Activated CD4-positive, alpha-beta T cell treated with anti-CD3 and anti-CD28 coated beads for 36 hours (primary cell): ENCODE measurements at regions of chr4 and their contacts with region 1.

Region 1: GRCh38 chr4:1289207-1290164 is at the start of gene MAEA:
- DNase-seq: peak; percentile 99
- ATAC-seq: peak; percentile 98
- H3K4me3 Mint-ChIP-seq: peak within 1 kb of the TSS; percentile 95
- H3K27ac Mint-ChIP-seq: peak within 1 kb of the TSS; percentile 87
- H3K4me1 Mint-ChIP-seq: peaks cover 41% of the 10 kb centered on the region
- H3K27me3 Mint-ChIP-seq: no peaks in the 10 kb centered on the region
- total RNA-seq, gene MAEA: 38.9 to 40.4 TPM

Region 2: DNA sequence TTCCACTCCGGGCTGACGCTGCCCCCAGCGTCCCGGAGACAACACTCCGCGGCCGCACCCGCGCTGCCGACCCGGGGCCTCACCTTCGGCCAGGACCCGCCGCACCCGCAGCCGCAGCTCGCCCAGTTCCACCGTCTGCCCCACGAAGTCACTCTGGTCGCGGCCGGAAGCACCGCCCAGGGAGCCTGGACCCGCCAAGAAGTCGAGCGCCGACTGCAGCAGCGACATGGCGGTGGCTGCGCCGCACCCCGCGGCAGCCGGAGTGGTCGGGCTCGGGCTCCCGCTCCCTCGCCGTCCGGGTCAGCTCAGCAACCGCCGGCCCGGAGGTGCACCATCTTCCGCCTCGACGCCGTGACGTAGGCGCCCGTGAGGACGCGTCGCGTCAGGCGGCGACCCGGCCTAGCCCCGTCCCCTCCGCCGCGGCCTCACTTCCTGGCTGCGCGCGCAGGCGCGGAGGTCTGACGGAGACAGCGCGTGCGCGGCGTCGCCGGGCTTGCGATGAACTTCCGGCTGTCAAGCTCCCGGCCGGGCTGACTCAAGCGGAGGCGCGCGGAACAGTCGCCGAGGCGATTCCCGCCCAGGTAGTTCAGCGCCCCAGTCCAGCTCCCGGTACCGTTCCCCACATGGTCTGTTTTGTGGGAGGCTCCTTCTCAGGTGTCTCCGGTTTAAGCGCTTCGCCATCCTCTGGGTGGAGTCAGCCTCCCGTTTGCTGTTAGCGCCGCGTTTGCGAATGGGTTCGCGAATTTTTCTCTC is 357.4 kb before region 1 on chr4 and contains the starts of genes GAK and TMEM175:
- CTCF ChIA-PET with region 1: no interaction called
- POLR2A ChIA-PET with region 1: no interaction called
- intact Hi-C with region 1: loop called in 1 of 2 experiments (anchors 1 kb)
- DNase-seq: peak; percentile 98
- ATAC-seq: peak; percentile 95
- H3K4me3 Mint-ChIP-seq: peak within 1 kb of the TSS; percentile 87
- H3K27ac Mint-ChIP-seq: peak within 1 kb of the TSS; percentile 89
- H3K4me1 Mint-ChIP-seq: peaks cover 29% of the 10 kb centered on the region
- H3K27me3 Mint-ChIP-seq: no peaks in the 10 kb centered on the region
- total RNA-seq, gene GAK: 82.9 to 88.0 TPM
- total RNA-seq, gene TMEM175: 15.2 to 17.3 TPM

Region 3: DNA sequence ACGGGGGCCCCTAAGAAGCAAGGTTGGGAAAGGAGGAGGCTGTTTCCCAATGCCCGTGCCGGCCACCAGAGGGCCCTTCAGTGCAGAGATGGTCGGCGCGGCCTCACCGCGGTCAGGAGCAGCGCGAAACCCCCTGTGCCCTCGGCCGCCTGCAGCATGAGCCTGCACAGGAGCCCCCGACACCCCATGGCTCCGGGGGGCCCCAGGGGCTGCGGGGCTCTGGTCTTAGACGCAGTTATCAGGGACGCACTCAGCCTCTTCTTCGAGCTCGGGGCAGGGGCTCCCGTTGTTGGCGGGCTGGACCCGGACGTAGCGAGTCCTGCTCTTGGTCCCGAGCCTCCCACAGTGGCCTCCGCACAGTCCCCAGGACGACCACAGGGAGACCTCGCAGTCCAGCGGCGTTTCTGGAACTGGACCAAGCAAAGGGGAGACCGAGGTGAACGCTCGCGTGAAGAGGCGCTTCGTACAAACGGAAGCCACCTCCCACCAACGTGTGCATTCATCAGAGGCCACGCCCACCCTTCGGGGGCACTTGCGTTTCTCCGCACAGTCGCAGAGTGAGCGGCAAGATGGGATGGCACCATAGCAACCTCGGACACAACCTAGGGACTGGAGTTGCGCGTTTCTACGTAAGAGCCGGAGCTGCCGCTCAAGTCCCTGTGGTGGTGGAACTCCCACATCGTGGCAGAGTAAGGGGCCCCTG is 122.1 kb before region 1 on chr4:
- CTCF ChIA-PET with region 1: interaction called, 7 read pairs
- POLR2A ChIA-PET with region 1: no interaction called
- intact Hi-C with region 1: loop called in 1 of 2 experiments (anchors 1 kb)
- DNase-seq: peak; percentile 95
- ATAC-seq: peak; percentile 92
- H3K4me3 Mint-ChIP-seq: peak overlapping the region; percentile 73
- H3K27ac Mint-ChIP-seq: peak overlapping the region; percentile 76
- H3K4me1 Mint-ChIP-seq: peaks cover 22% of the 10 kb centered on the region
- H3K27me3 Mint-ChIP-seq: peaks cover 15% of the 10 kb centered on the region

Region 4: DNA sequence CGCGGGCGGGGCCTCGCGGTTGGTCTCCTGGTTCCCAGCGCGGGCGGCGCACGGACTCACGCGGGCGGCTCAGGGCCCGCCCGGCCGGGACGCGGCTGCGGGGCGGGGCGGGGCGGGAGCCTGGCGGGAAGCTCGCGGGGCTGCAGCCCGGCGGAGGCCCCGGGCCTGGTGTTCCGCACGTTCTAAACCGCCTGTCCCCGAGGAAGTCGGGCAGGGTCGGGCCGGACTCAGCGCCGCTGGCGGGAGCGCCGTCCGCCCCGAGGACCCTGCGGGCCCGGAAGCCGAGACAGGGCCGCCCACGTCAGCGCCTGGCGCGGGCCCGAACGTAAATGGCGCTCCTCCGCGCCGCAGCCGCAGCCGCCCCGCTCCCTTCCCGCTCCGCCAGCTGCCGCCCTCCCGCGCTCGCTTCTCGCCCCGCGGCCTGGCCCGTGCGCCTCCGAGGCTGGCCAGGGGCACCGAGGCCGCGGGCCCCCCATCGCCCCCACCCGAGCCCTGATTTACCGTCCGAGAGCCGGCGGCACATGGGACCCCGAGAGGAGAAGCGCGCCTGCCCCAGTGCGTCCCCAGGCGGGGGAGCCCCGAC is 40.2 kb before region 1 on chr4:
- CTCF ChIA-PET with region 1: interaction called, 3 read pairs
- POLR2A ChIA-PET with region 1: interaction called, 3 read pairs
- intact Hi-C with region 1: loop called (anchors 1 kb)
- DNase-seq: peak; percentile 90
- ATAC-seq: peak; percentile 63
- H3K4me3 Mint-ChIP-seq: peak overlapping the region; percentile 80
- H3K27ac Mint-ChIP-seq: peak overlapping the region; percentile 94
- H3K4me1 Mint-ChIP-seq: peaks cover 74% of the 10 kb centered on the region
- H3K27me3 Mint-ChIP-seq: no peaks in the 10 kb centered on the region

Region 5: DNA sequence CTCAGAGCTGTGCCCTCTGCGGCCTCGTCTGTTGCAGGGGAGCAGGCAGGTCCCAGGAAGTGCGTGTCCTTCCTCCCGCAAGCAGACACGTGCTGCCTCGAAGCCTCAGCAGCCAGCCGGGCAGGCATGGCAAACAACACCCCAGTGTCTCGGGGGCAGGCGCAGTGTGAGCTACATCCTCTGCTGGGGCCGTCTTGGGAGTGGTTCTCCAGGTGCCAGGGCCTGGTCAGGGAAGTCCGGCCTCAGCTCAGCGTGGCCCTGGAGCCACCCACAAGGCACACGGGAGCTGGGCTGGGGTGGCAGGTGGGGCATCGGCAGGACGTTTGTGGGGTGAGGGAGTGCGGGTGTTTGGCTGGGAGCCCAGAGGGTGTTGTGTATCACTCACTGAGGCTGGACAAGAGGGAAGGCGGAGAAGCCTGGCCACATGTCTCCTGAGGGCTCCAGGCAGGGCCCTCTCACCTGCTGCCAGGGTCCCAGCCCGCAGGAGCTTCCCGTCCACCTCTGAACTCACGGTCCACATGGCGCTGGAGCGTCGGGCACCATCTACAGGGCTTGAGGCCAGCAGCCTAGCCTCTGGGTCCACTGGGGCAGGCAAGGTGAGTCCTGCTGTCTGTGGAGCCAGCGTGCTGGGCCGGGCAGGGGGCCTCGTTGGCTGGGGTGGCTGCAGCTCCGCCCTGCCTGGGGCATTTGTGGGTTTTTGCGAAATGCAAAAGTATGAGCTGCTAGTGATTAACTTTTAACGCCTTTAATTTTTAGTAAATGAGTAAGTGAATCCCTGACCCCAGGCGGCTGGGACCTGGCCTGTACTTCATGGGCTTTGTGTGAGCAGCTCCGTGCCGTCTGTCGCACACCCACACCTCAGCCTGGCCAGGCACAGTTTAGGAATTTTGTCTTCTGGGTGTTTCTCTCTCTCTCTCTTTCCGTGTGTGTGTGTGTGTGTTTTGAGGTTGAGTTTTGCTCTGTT is 40.2 kb after region 1 on chr4:
- CTCF ChIA-PET with region 1: no interaction called
- POLR2A ChIA-PET with region 1: no interaction called
- intact Hi-C with region 1: loop called in 1 of 2 experiments (anchors 1 kb)
- DNase-seq: peak; percentile 50
- ATAC-seq: no peak
- H3K4me3 Mint-ChIP-seq: peak overlapping the region; percentile 39
- H3K27ac Mint-ChIP-seq: peak overlapping the region; percentile 89
- H3K4me1 Mint-ChIP-seq: peaks cover 41% of the 10 kb centered on the region
- H3K27me3 Mint-ChIP-seq: no peaks in the 10 kb centered on the region

Region 6: GRCh38 chr4:1346781-1347409 is 57.4 kb after region 1 on chr4 and contains the start of gene UVSSA:
- CTCF ChIA-PET with region 1: interaction called, 10 read pairs
- POLR2A ChIA-PET with region 1: interaction called, 9 read pairs
- intact Hi-C with region 1: loop called (anchors 1 kb)
- DNase-seq: peak; percentile 100
- ATAC-seq: peak; percentile 95
- H3K4me3 Mint-ChIP-seq: peak within 1 kb of the TSS; percentile 86
- H3K27ac Mint-ChIP-seq: peak within 1 kb of the TSS; percentile 87
- H3K4me1 Mint-ChIP-seq: peaks cover 47% of the 10 kb centered on the region
- H3K27me3 Mint-ChIP-seq: no peaks in the 10 kb centered on the region
- total RNA-seq, gene UVSSA: 14.8 to 18.1 TPM

Region 7: GRCh38 chr4:1683736-1684505 is 394.4 kb after region 1 on chr4 and contains the start of gene FAM53A:
- CTCF ChIA-PET with region 1: no interaction called
- POLR2A ChIA-PET with region 1: no interaction called
- intact Hi-C with region 1: loop called in 1 of 2 experiments (anchors 1 kb)
- DNase-seq: no peak
- ATAC-seq: peak; percentile 96
- H3K4me3 Mint-ChIP-seq: peak within 1 kb of the TSS; percentile 69
- H3K27ac Mint-ChIP-seq: peak within 1 kb of the TSS; percentile 69
- H3K4me1 Mint-ChIP-seq: peaks cover 12% of the 10 kb centered on the region
- H3K27me3 Mint-ChIP-seq: no peaks in the 10 kb centered on the region
- total RNA-seq, gene FAM53A: 2.0 to 2.5 TPM